Right lobe of liver (tissue), 6 donors: ENCODE measurements at regions of chr16 and their contacts with region 1.

Region 1: GRCh38 chr16:23803591-23804123 is 32.1 kb upstream of the PRKCB start:
- DNase-seq: peak; percentile 60 to 70 (median 68)
- ATAC-seq: peak; percentile 74 to 85 (median 83)
- H3K4me3 ChIP-seq: no peak overlapping the region
- H3K27ac ChIP-seq: no peak overlapping the region
- H3K4me1 ChIP-seq: no peaks in the 10 kb centered on the region
- H3K27me3 ChIP-seq: no peaks in the 10 kb centered on the region
- CTCF ChIP-seq: peak; percentile 32 to 54 (median 45)
- POLR2A ChIP-seq: no peak

Region 2: GRCh38 chr16:24010440-24011089 is 206.9 kb after region 1 on chr16:
- intact Hi-C with region 1: loop called in 1 of 2 experiments (anchors 10 kb)
- DNase-seq: peak; percentile 60 to 78 (median 71)
- ATAC-seq: peak; percentile 65 to 90 (median 83)
- H3K4me3 ChIP-seq: no peak overlapping the region
- H3K27ac ChIP-seq: no peak overlapping the region
- H3K4me1 ChIP-seq: no peaks in the 10 kb centered on the region
- H3K27me3 ChIP-seq: no peaks in the 10 kb centered on the region
- CTCF ChIP-seq: peak; percentile 57 to 80 (median 75)
- POLR2A ChIP-seq: no peak